Left ventricle myocardium superior (tissue), 1 donor: ENCODE measurements at regions of chr6 and their contacts with region 1.

Region 1: DNA sequence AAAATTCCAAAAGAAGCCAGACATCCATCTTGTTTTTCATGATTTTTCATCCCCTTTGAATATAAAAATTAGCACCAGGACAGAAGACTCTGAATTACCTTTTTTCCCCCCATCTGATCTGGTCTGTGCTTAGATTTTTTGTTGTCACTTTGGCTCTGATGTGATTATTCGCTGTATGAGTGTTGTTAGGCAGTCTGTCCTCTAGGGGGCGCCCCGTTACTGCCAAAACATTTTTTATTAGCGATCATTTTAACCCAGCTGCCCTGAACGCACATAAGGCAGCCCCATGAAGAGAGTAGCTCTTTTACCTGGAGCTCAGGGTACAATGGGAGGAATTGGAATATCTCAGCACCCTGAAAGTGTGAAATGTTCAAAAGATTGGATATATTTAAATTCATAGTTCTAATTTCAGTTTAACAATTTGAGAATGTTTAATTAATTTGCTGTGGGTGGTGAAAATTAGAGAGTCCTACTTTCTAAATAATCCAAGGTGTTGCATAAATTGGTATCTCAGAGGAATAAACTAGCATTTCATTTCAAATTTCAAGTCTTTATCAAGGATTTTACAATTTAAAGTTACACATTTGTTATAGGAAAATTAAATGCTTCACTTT is 60.8 kb downstream of the PRPH2 start:
- DNase-seq: peak; percentile 80
- ATAC-seq: peak; percentile 87

Region 2: GRCh38 chr6:42726485-42727086 is 64.9 kb after region 1 on chr6:
- intact Hi-C with region 1: loop called (anchors 10 kb)
- DNase-seq: peak; percentile 70
- ATAC-seq: peak; percentile 96

Region 3: DNA sequence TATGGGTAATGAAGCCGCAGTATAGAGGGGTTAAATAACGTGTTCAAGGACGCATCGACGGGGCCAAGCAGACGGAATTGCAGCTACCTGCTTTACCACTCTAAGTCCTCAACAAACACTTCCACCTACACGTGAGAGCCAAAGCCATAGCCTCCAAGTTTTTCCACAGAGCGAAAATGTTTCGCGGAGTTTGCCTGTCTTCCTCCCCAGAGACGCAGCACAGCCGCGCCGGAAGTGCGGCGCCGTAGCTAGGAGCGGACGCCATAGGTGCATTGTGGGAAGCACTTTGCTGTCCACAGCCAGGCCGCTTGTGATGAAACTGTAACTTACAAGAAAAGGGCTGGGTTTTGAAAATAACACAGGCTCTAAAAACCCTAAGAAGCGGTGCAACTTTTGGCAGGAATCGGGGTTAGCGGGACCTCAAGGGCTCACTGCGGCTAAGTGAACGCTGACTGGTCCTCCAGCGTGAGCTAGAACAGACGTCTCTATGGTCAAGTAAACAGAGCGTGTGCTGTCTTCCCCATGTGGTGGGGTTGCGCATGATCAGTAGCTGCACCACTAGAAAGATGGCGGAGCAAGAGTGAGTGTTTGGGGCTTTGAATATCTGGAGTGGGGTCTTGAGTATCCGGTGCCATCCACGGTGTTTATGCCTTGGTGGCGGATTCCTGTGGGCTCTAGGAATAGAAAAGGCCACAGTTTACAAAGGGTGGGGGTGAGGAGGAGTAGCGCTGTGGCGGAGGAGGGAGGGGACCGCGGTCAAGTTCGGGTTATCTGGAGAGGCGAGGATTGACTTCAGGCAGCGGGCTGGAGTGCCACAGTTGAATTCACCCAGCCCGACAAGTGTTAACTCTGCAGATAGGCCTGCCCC is 218.0 kb after region 1 on chr6 and contains the start of gene RPL7L1:
- intact Hi-C with region 1: loop called (anchors 10 kb)
- DNase-seq: peak; percentile 89
- ATAC-seq: peak; percentile 98
- total RNA-seq, gene RPL7L1: 46.5 TPM